MCF 10A (cell line): ENCODE measurements at regions of chr18 and their contacts with region 1.

Region 1: GRCh38 chr18:32092422-32093101 is 888 bp downstream of the RNF138 start:
- DNase-seq: peak; percentile 96
- H3K4me3 Mint-ChIP-seq: peak overlapping the region; percentile 85
- H3K27ac Mint-ChIP-seq: peak overlapping the region; percentile 97
- H3K4me1 Mint-ChIP-seq: peaks cover 28% of the 10 kb centered on the region
- H3K27me3 Mint-ChIP-seq: no peaks in the 10 kb centered on the region
- CTCF ChIP-seq: no peak

Region 2: DNA sequence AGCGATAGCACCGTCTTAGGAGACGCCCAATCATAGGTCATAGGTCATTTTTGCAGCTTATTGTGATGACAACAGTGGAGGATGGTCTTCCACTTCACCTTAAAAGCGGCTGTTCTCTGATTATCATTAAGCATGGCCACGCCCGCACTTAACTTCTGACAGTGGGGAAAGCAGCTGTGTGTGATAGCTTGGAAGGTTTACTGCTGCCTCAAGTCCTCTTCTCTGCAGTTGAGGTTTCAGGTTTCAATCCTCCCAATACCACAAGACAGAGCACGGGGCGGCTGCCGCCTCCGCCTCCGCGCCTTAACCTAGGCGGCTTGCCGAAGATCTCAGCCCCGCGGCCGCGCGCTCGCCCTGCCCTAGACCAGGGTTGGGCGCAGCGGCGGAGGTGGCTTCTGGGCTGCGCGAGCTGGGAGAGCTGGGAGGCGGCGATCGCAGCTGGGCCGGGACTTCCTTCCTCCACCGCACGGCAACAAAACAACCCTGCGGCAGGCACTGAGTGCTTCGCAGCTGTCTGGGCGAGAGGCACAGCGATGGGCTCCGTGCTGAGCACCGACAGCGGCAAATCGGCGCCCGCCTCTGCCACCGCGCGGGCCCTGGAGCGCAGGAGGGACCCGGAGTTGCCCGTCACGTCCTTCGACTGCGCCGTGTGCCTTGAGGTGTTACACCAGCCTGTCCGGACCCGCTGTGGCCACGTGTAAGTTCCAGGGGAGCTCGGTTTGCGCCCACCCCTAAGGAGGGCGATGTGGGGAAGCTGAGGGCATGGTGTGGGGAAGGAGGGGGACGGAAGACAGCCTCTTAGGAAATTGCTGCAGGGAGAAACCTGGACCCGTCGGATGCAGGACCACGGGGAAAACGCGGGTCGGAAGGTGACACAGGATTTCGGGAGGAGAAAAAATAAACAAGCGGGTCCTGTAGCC is 74.0 kb before region 1 on chr18 and contains the start of gene RNF125:
- CTCF ChIA-PET with region 1: no interaction called
- POLR2A ChIA-PET with region 1: interaction called, 47 read pairs
- intact Hi-C with region 1: loop called (anchors 5 kb)
- DNase-seq: peak; percentile 89
- H3K4me3 Mint-ChIP-seq: peak within 1 kb of the TSS; percentile 88
- H3K27ac Mint-ChIP-seq: peak within 1 kb of the TSS; percentile 27
- H3K4me1 Mint-ChIP-seq: peaks cover 11% of the 10 kb centered on the region
- H3K27me3 Mint-ChIP-seq: no peaks in the 10 kb centered on the region
- CTCF ChIP-seq: no peak
- total RNA-seq, gene RNF125: 3.5 and 6.2 TPM in 2 replicates

Region 3: DNA sequence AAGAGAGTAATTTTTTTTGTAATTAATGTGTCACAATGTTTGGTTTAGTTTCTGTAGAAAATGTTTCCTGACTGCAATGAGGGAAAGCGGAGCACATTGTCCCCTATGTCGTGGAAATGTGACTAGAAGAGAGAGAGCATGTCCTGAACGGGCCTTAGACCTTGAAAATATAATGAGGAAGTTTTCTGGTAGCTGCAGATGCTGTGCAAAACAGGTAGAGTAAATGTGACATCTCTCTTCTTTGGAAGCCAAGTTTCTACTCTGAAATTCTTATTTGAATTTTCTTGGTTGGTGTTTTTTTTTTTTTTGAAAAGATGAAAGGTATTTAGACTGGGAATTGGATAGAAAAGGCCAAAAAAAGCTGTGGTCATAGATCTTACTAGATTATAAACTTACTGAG is 19.1 kb after region 1 on chr18:
- CTCF ChIA-PET with region 1: interaction called, 3 read pairs
- POLR2A ChIA-PET with region 1: interaction called, 12 read pairs
- intact Hi-C with region 1: no loop called
- DNase-seq: no peak
- H3K4me3 Mint-ChIP-seq: no peak overlapping the region
- H3K27ac Mint-ChIP-seq: no peak overlapping the region
- H3K4me1 Mint-ChIP-seq: peaks cover 6% of the 10 kb centered on the region
- H3K27me3 Mint-ChIP-seq: no peaks in the 10 kb centered on the region
- CTCF ChIP-seq: no peak

Region 4: DNA sequence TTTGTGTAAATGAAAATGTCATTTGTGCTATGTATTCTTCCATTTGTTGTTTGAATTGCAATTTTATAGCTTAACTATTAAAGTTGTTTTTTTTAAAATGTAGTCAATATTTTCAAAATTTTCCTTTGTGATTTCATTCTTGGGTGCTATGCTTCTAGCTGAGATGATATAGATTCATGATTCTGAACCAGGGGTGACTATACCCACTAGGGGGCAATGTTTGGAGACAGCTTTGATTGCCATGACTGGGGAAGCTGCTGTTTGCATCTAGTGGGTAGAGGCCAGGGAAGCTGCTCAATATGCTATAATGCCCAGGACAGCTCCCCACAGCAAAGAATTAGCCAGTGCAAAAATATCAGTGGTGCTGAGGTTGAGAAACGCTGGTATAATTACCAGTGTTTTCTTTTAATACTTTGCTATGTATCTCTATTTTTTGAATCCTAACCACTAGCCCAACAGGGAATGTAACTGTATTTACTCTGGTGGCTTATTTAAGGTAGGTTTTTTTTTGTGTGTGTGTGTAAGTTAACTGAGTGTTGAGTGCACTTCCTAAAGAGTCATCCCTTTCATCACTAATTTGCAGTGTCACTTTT is 197.0 kb after region 1 on chr18:
- CTCF ChIA-PET with region 1: no interaction called
- POLR2A ChIA-PET with region 1: no interaction called
- intact Hi-C with region 1: no loop called
- DNase-seq: peak; percentile 82
- H3K4me3 Mint-ChIP-seq: no peak overlapping the region
- H3K27ac Mint-ChIP-seq: no peak overlapping the region
- H3K4me1 Mint-ChIP-seq: peaks cover 26% of the 10 kb centered on the region
- H3K27me3 Mint-ChIP-seq: no peaks in the 10 kb centered on the region
- CTCF ChIP-seq: peak; percentile 59

Region 5: DNA sequence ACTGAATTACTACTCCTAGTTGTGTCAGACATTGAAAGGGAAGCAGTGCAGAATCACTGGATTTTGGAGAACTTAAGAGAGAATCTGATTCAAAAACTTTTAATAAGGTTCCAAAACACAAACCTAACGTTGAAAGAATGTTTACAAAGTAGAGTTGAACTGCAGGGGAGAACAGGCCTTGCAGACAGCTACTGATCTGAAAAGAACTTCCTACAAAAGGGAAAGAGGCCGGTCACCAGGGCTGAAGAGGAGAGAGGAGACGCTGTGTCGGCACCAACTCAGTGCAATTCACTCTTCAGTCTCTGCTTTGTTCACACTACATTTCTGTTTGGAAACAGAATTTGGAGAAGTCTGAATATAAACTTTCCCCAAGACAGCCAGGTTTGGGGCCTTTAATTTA is 254.1 kb after region 1 on chr18:
- CTCF ChIA-PET with region 1: no interaction called
- POLR2A ChIA-PET with region 1: no interaction called
- intact Hi-C with region 1: no loop called
- DNase-seq: no peak
- H3K4me3 Mint-ChIP-seq: no peak overlapping the region
- H3K27ac Mint-ChIP-seq: no peak overlapping the region
- H3K4me1 Mint-ChIP-seq: peaks cover 20% of the 10 kb centered on the region
- H3K27me3 Mint-ChIP-seq: no peaks in the 10 kb centered on the region
- CTCF ChIP-seq: no peak

Region 6: GRCh38 chr18:32919799-32920198 is 827.2 kb after region 1 on chr18:
- CTCF ChIA-PET with region 1: no interaction called
- POLR2A ChIA-PET with region 1: no interaction called
- intact Hi-C with region 1: loop called (anchors 5 kb)
- DNase-seq: peak; percentile 53
- H3K4me3 Mint-ChIP-seq: no peak overlapping the region
- H3K27ac Mint-ChIP-seq: no peak overlapping the region
- H3K4me1 Mint-ChIP-seq: peaks cover 13% of the 10 kb centered on the region
- H3K27me3 Mint-ChIP-seq: no peaks in the 10 kb centered on the region
- CTCF ChIP-seq: peak; percentile 24